K562 (cell line): ENCODE measurements at regions of chr16 and their contacts with region 1.

Region 1: DNA sequence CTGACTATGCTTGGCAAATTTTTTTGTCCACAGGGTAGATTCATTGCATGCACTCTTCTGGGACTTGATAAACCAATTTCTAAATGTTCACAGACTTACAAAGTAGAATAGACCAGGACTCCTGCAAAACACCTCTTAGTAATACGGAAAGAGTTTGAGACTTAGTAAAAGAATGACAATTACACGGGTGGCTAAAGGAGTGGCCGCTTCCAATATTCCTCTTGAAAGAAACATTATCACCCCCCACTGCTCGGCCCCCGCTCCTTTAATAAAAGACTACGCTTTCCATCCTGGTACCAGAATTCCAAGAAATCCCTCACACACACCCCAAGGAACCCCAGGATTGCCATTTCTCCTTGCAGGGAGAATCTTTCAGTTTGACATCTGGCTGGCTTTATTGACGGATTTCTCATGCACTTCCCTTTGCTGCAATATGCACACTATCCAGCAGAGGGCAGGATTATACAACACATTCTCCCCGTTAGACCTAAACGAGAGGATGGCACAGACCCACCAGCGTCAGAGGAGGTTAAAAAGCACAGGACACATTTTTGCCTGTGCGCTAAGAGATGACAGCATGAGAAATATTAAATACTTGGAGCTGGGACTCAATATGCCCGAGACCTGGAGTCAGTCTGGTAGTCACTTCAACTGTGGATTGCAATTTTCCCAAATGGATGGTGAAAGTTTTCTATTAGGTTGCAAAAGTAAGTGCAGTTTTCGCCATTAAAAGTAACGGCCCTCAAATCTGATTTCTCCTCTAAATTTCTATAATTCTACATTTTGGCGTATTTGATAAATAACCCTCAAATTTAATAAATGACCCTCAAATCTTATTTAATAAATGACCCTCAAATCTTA is 46.6 kb upstream of the NUDT7 start:
- DNase-seq: peak; percentile 66 to 71 (median 68)
- ATAC-seq: peak; percentile 89
- H3K4me3 ChIP-seq: no peak overlapping the region
- H3K27ac ChIP-seq: no peak overlapping the region
- H3K4me1 ChIP-seq: no peaks in the 10 kb centered on the region
- H3K27me3 ChIP-seq: peaks cover 4 to 5% of the 10 kb centered on the region in 2 experiments; a peak in 2 of 5 replicates
- CTCF ChIP-seq: peak; percentile 85 to 92 (median 87)
- EP300 ChIP-seq: no peak
- POLR2A ChIP-seq: no peak
- RAD21 ChIP-seq: peak; percentile 92 to 95

Region 2: DNA sequence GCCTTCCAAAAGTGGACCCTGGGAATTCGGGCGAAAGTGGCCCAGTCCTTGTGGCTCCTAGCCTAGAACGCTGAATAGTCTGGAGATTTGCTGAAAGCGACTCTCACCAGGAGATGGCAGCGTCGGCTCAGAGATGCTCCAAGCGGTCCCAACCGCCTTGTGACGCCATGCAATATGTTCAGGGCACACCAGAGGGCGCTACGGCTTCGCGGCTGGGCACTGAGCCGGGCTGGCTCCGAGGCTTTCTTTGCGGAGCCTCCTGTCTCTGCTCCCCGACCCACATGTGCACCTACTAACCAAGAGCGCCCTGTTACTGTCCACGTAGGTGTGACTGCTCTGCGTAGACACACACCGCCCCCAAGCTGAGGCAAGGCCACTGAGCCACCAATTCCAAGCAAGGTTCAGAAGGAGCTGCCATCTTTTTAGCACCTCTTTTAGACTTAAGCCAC is 439.6 kb before region 1 on chr16:
- CTCF ChIA-PET with region 1: interaction called, 5 read pairs
- POLR2A ChIA-PET with region 1: no interaction called
- in situ Hi-C with region 1: no loop called
- intact Hi-C with region 1: loop called (anchors 5 kb)
- DNase-seq: peak; percentile 83 to 90 (median 88)
- ATAC-seq: peak; percentile 97
- H3K4me3 ChIP-seq: no peak overlapping the region
- H3K27ac ChIP-seq: no peak overlapping the region
- H3K4me1 ChIP-seq: no peaks in the 10 kb centered on the region
- H3K27me3 ChIP-seq: peaks cover 3 to 8% of the 10 kb centered on the region in 2 experiments; a peak in 3 of 5 replicates
- CTCF ChIP-seq: peak; percentile 99 to 100 (median 99)
- EP300 ChIP-seq: peak; percentile 11; the same call in 1 of the 2 replicates
- POLR2A ChIP-seq: no peak
- RAD21 ChIP-seq: peak; percentile 99 to 100

Region 3: GRCh38 chr16:77782694-77783093 is 107.0 kb after region 1 on chr16:
- CTCF ChIA-PET with region 1: interaction called, 3 read pairs
- POLR2A ChIA-PET with region 1: no interaction called
- in situ Hi-C with region 1: no loop called
- intact Hi-C with region 1: loop called (anchors 2 kb)
- DNase-seq: peak in 2 of 4 experiments; percentile 12 to 14
- ATAC-seq: peak; percentile 67; the same call in 2 of the 3 replicates
- H3K4me3 ChIP-seq: no peak overlapping the region
- H3K27ac ChIP-seq: no peak overlapping the region
- H3K4me1 ChIP-seq: no peaks in the 10 kb centered on the region
- H3K27me3 ChIP-seq: peaks cover 0 to 3% of the 10 kb centered on the region in 2 experiments; a peak in 1 of 5 replicates
- CTCF ChIP-seq: peak; percentile 9 to 43 (median 30); a peak in 2 of 6 replicates
- EP300 ChIP-seq: no peak
- POLR2A ChIP-seq: no peak
- RAD21 ChIP-seq: peak; percentile 16 to 45; a peak in 2 of 4 replicates

Region 4: GRCh38 chr16:77971306-77972271 is 295.9 kb after region 1 on chr16:
- CTCF ChIA-PET with region 1: interaction called, 31 read pairs
- POLR2A ChIA-PET with region 1: no interaction called
- in situ Hi-C with region 1: loop called (anchors 5 kb)
- intact Hi-C with region 1: loop called (anchors 1 kb)
- DNase-seq: peak; percentile 72 to 81 (median 80)
- ATAC-seq: peak; percentile 96
- H3K4me3 ChIP-seq: no peak overlapping the region
- H3K27ac ChIP-seq: no peak overlapping the region
- H3K4me1 ChIP-seq: no peaks in the 10 kb centered on the region
- H3K27me3 ChIP-seq: peaks cover 0 to 2% of the 10 kb centered on the region in 2 experiments; a peak in 3 of 5 replicates
- CTCF ChIP-seq: peak; percentile 75 to 86 (median 82)
- EP300 ChIP-seq: no peak
- POLR2A ChIP-seq: no peak
- RAD21 ChIP-seq: peak; percentile 76 to 86

Region 5: GRCh38 chr16:78002915-78003538 is 327.3 kb after region 1 on chr16:
- CTCF ChIA-PET with region 1: interaction called, 6 read pairs
- POLR2A ChIA-PET with region 1: no interaction called
- in situ Hi-C with region 1: no loop called
- intact Hi-C with region 1: loop called (anchors 1 kb)
- DNase-seq: peak; percentile 83 to 86 (median 84)
- ATAC-seq: peak; percentile 99
- H3K4me3 ChIP-seq: no peak overlapping the region
- H3K27ac ChIP-seq: no peak overlapping the region
- H3K4me1 ChIP-seq: no peaks in the 10 kb centered on the region
- H3K27me3 ChIP-seq: peaks cover 2 to 10% of the 10 kb centered on the region in 2 experiments; a peak in 2 of 5 replicates
- CTCF ChIP-seq: peak; percentile 85 to 95 (median 94)
- EP300 ChIP-seq: no peak
- POLR2A ChIP-seq: no peak
- RAD21 ChIP-seq: peak; percentile 33 to 69

Region 6: GRCh38 chr16:78099372-78100161 is 423.9 kb after region 1 on chr16 and contains the start of gene WWOX:
- CTCF ChIA-PET with region 1: no interaction called
- POLR2A ChIA-PET with region 1: no interaction called
- in situ Hi-C with region 1: no loop called
- intact Hi-C with region 1: loop called (anchors 10 kb)
- DNase-seq: peak; percentile 93 to 98 (median 94)
- ATAC-seq: peak; percentile 98
- H3K4me3 ChIP-seq: peak within 1 kb of the TSS; percentile 78
- H3K27ac ChIP-seq: peak within 1 kb of the TSS; percentile 85
- H3K4me1 ChIP-seq: peaks cover 8 to 13% of the 10 kb centered on the region in 2 experiments; a peak in 4 of 5 replicates
- H3K27me3 ChIP-seq: no peaks in the 10 kb centered on the region
- CTCF ChIP-seq: peak; percentile 78 to 91 (median 80)
- EP300 ChIP-seq: no peak
- POLR2A ChIP-seq: peak; percentile 76
- RAD21 ChIP-seq: peak; percentile 19 to 51; a peak in 3 of 4 replicates
- polyA plus RNA-seq, gene WWOX: 1.6 to 1.7 TPM

Region 7: DNA sequence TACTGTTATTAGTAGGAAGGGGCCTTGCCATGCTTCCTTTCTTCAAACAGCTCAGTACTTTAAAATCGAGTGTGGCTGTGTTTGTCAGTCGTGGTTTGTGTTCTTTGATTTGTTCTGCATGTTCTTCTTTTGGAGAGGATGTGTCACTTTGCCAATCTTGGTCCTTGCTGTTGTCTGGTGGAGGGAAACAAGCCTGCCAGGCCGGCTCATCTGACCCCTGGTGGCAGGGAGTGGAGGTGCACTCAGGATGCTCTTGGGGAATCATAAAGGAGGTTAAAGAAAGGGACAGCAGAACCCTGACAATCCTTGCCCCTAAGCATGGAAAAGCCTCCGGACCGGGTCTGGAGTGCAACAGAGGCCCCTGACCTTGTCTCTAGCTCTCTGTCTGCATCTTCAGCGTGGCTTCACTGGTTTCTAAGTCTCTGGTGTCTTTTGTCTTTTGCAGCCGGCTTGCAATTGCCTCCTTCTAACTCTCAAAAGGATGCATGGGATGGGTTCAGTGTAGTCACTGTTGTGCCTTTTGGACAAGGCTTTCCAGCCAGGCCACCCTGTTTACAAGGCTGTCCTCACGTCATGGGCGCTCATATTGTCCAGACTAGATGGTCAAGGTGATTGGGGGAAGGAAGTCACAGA is 559.6 kb after region 1 on chr16:
- CTCF ChIA-PET with region 1: no interaction called
- POLR2A ChIA-PET with region 1: no interaction called
- in situ Hi-C with region 1: no loop called
- intact Hi-C with region 1: loop called (anchors 10 kb)
- DNase-seq: peak; percentile 72 to 85 (median 80)
- ATAC-seq: peak; percentile 96
- H3K4me3 ChIP-seq: no peak overlapping the region
- H3K27ac ChIP-seq: no peak overlapping the region
- H3K4me1 ChIP-seq: no peaks in the 10 kb centered on the region
- H3K27me3 ChIP-seq: peaks cover 3 to 8% of the 10 kb centered on the region in 2 experiments; a peak in 3 of 5 replicates
- CTCF ChIP-seq: peak; percentile 86 to 93 (median 89)
- EP300 ChIP-seq: no peak
- POLR2A ChIP-seq: no peak
- RAD21 ChIP-seq: peak; percentile 71 to 74